Astrocyte of the cerebellum (primary cell): ENCODE measurements at regions of chr1 and their contacts with region 1.

Region 1: DNA sequence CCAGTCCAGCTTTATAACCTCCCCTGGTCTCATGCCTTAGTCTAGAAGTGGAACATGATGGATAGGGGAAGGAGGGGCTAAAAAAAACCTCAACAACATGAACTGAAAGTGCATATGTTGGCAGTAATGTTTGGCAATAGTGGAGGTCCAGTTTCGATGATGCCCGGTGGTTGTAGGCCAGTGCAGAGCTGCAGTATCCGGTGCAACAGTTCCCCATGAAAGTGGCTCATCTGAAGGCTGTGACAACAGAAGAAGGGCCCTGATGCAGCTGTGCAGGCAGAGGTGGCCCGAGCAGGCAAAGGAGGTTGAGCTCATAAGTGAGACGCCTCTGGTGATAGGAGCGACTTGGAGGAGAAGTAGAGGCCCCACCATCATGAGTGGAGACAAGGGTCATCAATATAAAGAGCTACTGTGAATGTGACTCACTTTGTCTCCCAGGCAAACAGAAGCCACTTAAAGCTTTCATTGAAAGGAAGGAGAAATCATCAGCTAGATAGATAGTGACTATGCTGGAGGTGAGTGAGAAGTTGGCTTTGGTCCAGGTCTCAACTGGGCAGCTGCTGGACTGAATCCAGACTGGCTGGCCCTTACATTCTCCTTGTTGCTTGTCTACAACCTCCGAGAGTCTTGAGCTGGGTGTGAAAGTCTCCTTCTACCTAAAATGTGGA is 10.2 kb upstream of the CREG1 start:
- DNase-seq: no peak
- H3K4me3 ChIP-seq: no peak overlapping the region
- CTCF ChIP-seq: no peak

Region 2: DNA sequence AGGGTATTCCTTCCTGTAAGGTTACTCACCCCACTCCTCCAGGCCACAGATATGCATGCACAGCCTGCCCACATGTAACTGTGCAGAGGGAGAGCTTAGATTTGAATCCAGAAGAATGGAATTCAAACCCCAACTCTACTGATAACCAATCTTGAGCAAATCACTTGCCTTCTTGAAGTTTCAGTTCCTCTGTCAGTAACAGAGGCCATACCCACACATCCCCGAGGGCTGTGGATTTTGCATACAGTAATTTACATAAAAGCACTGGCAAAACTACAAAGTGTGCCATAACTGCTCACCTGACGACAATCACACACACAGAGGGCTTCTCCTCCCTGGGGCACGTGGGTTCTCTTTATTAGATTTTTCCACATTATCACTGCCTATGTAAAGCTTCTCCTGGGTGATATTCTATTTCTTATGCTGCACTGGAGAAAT is 64.0 kb before region 1 on chr1:
- in situ Hi-C with region 1: no loop called
- DNase-seq: no peak
- H3K4me3 ChIP-seq: no peak overlapping the region
- CTCF ChIP-seq: no peak

Region 3: GRCh38 chr1:167627865-167628641 is 64.3 kb after region 1 on chr1:
- in situ Hi-C with region 1: loop called (anchors 10 kb)
- DNase-seq: no peak
- H3K4me3 ChIP-seq: no peak overlapping the region
- CTCF ChIP-seq: no peak

Region 4: DNA sequence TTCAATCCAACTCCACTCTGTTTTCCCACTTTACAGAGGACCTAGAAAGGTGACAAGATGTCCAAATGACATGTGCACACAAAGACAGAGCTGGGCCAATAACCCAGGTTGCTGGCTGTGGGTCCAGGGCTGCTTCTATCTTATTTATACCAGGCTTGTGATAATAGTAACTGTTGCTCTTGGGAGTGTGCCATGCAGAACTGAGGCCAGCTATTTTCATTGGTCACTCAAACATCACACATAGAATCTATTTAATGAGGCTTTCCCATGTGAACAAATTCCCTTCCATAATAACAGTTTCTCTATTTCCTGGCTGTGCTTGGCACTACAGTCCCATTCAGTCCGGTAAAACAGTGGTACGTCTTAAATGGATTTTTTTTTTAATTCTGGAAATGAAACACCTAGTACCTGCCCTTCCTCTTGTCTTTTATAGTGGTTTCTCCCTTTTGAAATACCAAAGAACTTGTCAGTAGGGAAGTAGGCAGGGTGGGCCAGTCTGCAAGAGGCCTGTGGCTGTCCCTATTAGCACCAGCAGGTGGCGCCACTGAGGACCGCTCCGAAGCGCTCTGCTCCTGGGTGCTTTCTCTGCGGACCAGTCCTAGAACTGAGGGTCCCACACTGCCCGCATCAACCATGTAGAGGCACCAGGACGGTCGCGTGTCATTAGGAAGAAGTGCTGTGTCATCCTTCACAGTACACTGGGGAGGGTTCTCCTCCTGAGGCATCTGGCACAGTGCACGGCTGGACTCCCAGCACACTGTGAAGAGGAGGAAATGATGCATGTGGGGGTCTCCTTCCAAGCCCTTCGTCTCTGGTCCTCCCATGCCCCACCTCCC is 520.9 kb after region 1 on chr1:
- in situ Hi-C with region 1: no loop called
- DNase-seq: peak; percentile 6
- H3K4me3 ChIP-seq: no peak overlapping the region
- CTCF ChIP-seq: peak; percentile 89